ENCODE measurements at regions of chr20 and their contacts with region 1.

Region 1: DNA sequence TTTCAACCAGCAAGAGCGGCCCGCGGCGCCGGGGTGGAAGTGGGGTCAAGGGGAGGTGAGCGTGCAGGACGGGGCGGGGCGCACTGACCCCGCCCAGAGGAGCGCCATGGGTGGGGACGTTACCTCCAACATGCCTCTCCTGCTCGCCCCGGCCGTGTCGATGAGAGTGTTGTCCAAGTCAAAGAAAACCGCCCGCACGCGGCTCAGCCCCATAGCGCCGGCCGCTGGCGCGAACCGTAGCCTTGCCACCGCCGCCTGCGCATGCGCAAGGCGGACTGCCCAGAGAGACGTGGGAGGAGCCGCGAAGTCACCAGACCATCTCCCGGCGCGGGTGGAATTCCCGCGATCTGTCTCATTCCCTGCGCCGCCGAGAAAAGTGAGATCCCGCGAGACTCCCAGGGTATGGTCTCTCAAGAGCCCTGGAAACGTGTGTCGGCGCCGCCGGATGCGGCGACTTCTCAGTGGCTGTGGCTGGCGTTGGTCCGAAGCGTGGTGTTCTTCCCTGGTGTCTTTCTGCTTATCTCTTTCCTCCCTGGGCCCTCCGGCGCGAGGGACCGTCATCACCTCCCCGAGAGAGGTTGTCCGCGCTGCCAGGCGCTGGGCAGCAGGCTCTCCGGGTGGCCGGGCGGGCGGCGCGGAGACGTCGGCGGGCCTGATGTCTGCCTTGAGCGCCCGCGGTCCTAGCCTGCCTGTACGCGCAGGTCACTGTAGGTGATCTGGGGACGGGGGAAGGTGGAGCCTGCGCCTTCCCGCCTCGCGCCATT is at the start of gene NANP:
- DNase-seq: peak; percentile 99
- H3K4me3 ChIP-seq: peak within 1 kb of the TSS; percentile 68 to 98 (median 78)
- H3K27ac ChIP-seq: peak within 1 kb of the TSS; percentile 83 to 97 (median 92)
- H3K4me1 ChIP-seq: peaks cover 0 to 28% (median 13%) of the 10 kb centered on the region in 4 donors
- H3K27me3 ChIP-seq: no peaks in the 10 kb centered on the region
- CTCF ChIP-seq: no peak
- EP300 ChIP-seq: peak in 1 of 4 donors; percentile 30
- POLR2A ChIP-seq: peak; percentile 52 to 65
- total RNA-seq, gene NANP: 3.9 to 5.7 (median 4.8) TPM

Region 2: DNA sequence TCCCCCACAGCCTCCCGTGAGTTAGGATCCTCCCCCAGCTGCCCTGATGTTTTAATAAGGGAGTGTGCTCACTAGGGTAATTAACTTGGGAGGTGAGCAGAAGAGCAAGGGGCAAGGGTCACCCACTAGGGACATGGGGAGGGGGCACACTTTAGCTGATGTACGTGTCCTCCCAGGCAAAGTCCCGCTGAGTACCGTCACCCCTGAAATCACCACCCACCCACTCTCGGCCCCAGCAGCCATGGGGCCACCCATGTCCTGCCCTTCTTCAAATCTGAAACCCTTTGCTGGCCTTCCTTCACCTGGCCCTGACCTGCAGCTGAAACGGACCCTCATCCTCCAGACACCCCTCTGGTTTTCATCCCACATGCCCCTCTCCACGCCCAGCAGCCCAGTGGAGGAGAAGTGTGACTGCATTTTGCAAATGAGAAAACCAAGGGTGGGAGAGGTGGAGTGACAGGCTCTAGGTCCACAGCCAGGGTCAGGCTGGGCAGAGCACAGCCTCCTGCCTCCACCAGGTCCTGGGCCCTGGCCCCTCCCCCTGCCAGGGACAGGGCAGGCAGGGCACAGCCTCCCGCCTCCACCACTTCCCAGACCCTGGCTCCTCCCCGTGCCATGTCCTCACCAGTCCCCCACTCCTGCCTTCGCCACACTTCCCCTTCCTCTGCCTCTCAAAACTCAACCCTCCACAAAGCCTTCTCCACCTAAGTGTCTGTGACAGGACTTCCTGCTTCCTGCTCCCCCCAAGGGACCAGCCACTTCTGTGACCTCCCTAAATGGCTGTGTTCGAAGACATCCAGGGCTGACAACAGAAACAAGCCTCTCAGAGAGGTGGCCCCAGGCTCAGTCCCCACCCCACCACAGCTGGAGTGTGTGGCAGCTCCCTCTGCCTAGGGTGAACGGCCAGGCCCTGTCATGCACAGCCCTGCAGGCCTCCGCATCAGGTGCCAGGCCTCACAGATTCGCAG is 581.1 kb before region 1 on chr20:
- intact Hi-C with region 1: loop called (anchors 10 kb)
- DNase-seq: peak; percentile 85
- H3K4me3 ChIP-seq: no peak overlapping the region
- H3K27ac ChIP-seq: peak overlapping the region; percentile 52 to 93 (median 88)
- H3K4me1 ChIP-seq: peaks cover 0 to 79% (median 62%) of the 10 kb centered on the region in 4 donors
- H3K27me3 ChIP-seq: no peaks in the 10 kb centered on the region
- CTCF ChIP-seq: no peak
- EP300 ChIP-seq: no peak
- POLR2A ChIP-seq: no peak

Region 3: DNA sequence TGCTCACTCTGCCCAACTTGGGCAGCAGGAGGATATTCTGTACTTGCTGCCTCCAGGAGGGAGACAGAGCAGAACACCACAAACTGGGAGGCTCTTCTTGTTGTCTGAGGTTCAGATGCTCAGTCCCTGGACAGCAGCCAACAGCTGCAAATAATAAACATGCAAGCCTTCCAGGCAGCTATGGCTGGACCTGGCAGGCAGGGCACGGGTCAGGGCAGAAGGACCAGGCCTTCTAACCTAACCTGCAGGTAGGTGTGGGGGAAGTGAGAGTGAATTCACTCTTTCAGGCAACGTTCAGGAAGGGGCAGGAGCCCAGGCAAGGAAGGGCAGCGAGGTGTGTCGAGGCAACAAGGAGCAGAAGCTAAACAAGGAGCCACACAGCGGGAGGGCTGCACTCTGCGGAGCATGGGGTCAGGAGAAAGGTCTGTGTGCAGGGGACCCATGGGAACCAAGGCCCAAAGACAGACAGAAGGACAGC is 70.1 kb before region 1 on chr20:
- intact Hi-C with region 1: loop called (anchors 5 kb)
- DNase-seq: peak; percentile 75
- H3K4me3 ChIP-seq: no peak overlapping the region
- H3K27ac ChIP-seq: peak overlapping the region in 3 of 4 donors; percentile 60 to 72 (median 63)
- H3K4me1 ChIP-seq: peaks cover 0 to 54% (median 52%) of the 10 kb centered on the region in 4 donors
- H3K27me3 ChIP-seq: no peaks in the 10 kb centered on the region
- CTCF ChIP-seq: no peak
- EP300 ChIP-seq: no peak
- POLR2A ChIP-seq: no peak

Region 4: DNA sequence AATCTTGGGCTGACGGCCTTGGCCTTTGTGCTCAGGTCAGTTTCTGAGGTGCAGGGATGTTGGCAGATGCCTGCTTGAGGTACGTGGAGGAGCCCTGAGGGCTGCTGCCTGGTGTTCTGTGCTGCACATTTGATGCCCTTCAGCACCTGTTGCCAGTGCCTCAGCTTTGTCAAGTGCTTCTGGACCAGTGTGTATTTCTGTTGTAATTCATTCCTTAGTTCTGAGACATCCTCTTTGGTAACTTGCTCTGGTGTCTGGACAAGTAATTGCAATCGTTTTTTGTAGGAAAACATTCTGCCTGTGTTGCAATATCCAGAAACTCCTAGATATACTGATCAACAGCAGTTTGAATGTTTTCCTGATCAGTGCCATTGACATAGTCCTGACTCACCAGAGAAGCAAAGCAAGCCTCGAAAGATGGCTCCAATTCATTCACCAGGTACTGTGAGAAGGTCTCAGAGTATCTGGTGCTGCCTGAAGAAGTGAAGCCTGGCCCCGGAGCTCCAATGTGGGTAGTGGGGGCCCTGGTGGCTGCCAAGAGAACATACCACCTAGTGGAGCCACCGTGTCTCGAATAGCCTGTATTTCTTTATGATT is 46.0 kb after region 1 on chr20:
- intact Hi-C with region 1: loop called (anchors 5 kb)
- DNase-seq: no peak
- H3K4me3 ChIP-seq: no peak overlapping the region
- H3K27ac ChIP-seq: peak overlapping the region in 1 of 4 donors; percentile 39
- H3K4me1 ChIP-seq: peaks cover 0 to 21% (median 13%) of the 10 kb centered on the region in 4 donors
- H3K27me3 ChIP-seq: no peaks in the 10 kb centered on the region
- CTCF ChIP-seq: no peak
- EP300 ChIP-seq: no peak
- POLR2A ChIP-seq: no peak

Region 5: GRCh38 chr20:25696384-25697131 is 72.6 kb after region 1 on chr20 and contains the start of gene ZNF337:
- intact Hi-C with region 1: loop called (anchors 2 kb)
- DNase-seq: peak; percentile 97
- H3K4me3 ChIP-seq: peak within 1 kb of the TSS; percentile 67 to 95 (median 88)
- H3K27ac ChIP-seq: peak within 1 kb of the TSS; percentile 89 to 93 (median 92)
- H3K4me1 ChIP-seq: peaks cover 0 to 19% (median 13%) of the 10 kb centered on the region in 4 donors
- H3K27me3 ChIP-seq: no peaks in the 10 kb centered on the region
- CTCF ChIP-seq: no peak
- EP300 ChIP-seq: no peak
- POLR2A ChIP-seq: peak; percentile 59 to 66
- total RNA-seq, gene ZNF337: 15.6 to 18.6 (median 17.2) TPM

Measured in sigmoid colon (tissue), 7 donors.